PC-3 (cell line): ENCODE measurements at regions of chr13 and their contacts with region 1.

Region 1: GRCh38 chr13:108322206-108322824 is 52.8 kb downstream of the TNFSF13B start:
- DNase-seq: peak; percentile 60
- ATAC-seq: peak; percentile 86
- H3K4me3 ChIP-seq: no peak overlapping the region
- H3K27ac ChIP-seq: no peak overlapping the region
- H3K4me1 ChIP-seq: no peaks in the 10 kb centered on the region
- H3K27me3 ChIP-seq: peaks cover 43% of the 10 kb centered on the region
- CTCF ChIP-seq: peak; percentile 81

Region 2: DNA sequence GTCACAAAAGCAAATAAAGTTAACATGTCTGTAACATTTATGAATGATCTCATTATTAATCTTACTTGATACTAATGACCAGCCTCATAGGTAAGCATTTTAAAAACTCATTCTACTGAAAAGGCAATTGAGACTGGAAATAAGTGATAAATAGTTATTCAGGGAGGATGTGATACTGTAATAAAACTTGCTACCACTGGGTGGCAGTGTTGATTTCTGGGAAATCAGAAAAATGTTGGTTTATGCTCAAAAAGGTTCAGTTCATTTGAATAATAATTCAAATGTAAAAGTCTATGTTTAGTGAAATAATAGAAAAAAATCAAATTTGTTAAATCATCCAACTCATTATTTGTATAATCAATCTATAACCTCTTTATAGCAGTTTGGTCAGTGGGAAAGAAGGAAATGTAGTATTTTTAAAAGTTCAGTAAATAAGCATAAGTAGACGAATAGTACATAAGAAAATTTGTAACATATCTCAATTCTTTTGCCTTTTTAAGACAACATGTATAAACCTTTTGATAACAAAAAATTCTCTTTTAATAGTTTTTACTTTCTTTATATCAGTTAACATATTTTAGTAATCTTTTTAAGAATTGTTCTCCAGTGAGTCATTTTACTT is 94.6 kb before region 1 on chr13:
- CTCF ChIA-PET with region 1: no interaction called
- POLR2A ChIA-PET with region 1: no interaction called
- intact Hi-C with region 1: loop called (anchors 5 kb)
- DNase-seq: peak; percentile 67
- ATAC-seq: peak; percentile 18; the same call in 1 of the 2 replicates
- H3K4me3 ChIP-seq: no peak overlapping the region
- H3K27ac ChIP-seq: no peak overlapping the region
- H3K4me1 ChIP-seq: peaks cover 17% of the 10 kb centered on the region
- H3K27me3 ChIP-seq: no peaks in the 10 kb centered on the region
- CTCF ChIP-seq: peak; percentile 83

Region 3: GRCh38 chr13:108508263-108508662 is 185.9 kb after region 1 on chr13:
- CTCF ChIA-PET with region 1: no interaction called
- POLR2A ChIA-PET with region 1: no interaction called
- intact Hi-C with region 1: loop called (anchors 5 kb)
- DNase-seq: peak; percentile 15
- ATAC-seq: no peak
- H3K4me3 ChIP-seq: no peak overlapping the region
- H3K27ac ChIP-seq: no peak overlapping the region
- H3K4me1 ChIP-seq: no peaks in the 10 kb centered on the region
- H3K27me3 ChIP-seq: no peaks in the 10 kb centered on the region
- CTCF ChIP-seq: peak; percentile 50; the same call in 1 of the 2 replicates